SK-N-SH (cell line): ENCODE measurements at regions of chr2 and their contacts with region 1.

Region 1: GRCh38 chr2:152115952-152116351 is 17.1 kb upstream of the CACNB4 start:
- DNase-seq: no peak
- H3K4me3 ChIP-seq: no peak overlapping the region
- H3K27ac ChIP-seq: no peak overlapping the region
- H3K4me1 ChIP-seq: no peaks in the 10 kb centered on the region
- H3K27me3 ChIP-seq: no peaks in the 10 kb centered on the region
- CTCF ChIP-seq: no peak
- EP300 ChIP-seq: no peak
- RAD21 ChIP-seq: no peak

Region 2: DNA sequence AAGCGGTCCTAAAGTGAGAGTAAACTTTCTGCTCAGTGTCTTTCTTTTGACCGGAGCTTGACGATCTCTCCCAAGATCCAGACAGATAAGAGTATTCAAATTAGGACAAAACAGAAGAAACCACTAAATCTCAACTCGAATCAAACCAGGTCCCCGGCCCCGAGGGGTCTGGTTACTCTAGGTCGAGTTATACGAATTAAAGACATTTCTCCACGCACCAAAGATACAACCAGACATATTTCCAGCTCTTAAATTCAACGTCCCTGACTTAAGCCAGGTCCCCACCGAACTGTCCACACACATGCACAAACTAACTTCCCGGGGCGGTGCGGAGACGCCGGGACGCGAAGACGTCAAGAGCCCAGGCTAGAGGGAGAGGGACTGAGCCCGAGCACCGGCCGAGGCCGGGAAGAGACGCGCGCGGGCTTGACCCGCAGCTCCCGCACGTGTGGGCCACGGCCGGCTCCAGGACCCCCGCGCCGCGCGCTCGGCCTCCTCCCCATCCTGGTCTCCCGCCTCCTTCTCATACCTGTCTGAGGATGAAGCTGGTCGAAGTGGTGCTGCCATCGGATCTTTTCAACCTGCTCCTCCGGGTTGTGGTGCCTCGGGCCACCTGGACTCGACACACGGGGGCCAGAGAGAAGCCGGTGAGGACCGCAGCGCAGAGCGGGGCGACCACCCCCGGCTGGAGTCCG is 18.0 kb before region 1 on chr2:
- CTCF ChIA-PET with region 1: interaction called, 10 read pairs
- POLR2A ChIA-PET with region 1: no interaction called
- DNase-seq: no peak
- H3K4me3 ChIP-seq: peak overlapping the region; percentile 49 to 61
- H3K27ac ChIP-seq: no peak overlapping the region
- H3K4me1 ChIP-seq: peaks cover 0 to 20% of the 10 kb centered on the region in 2 experiments; a peak in 2 of 4 replicates
- H3K27me3 ChIP-seq: peaks cover 34% of the 10 kb centered on the region
- CTCF ChIP-seq: no peak
- EP300 ChIP-seq: no peak
- RAD21 ChIP-seq: no peak

Region 3: GRCh38 chr2:152466980-152467676 is 351.2 kb after region 1 on chr2:
- CTCF ChIA-PET with region 1: no interaction called
- POLR2A ChIA-PET with region 1: no interaction called
- DNase-seq: no peak
- H3K4me3 ChIP-seq: no peak overlapping the region
- H3K27ac ChIP-seq: peak overlapping the region in 1 of 2 experiments; percentile 69; a peak in 2 of 4 replicates
- H3K4me1 ChIP-seq: peaks cover 0 to 26% of the 10 kb centered on the region in 2 experiments; a peak in 3 of 4 replicates
- H3K27me3 ChIP-seq: no peaks in the 10 kb centered on the region
- CTCF ChIP-seq: no peak
- EP300 ChIP-seq: no peak
- RAD21 ChIP-seq: no peak